Gastrocnemius medialis (tissue), 4 donors: ENCODE measurements at regions of chr2 and their contacts with region 1.

Region 1: DNA sequence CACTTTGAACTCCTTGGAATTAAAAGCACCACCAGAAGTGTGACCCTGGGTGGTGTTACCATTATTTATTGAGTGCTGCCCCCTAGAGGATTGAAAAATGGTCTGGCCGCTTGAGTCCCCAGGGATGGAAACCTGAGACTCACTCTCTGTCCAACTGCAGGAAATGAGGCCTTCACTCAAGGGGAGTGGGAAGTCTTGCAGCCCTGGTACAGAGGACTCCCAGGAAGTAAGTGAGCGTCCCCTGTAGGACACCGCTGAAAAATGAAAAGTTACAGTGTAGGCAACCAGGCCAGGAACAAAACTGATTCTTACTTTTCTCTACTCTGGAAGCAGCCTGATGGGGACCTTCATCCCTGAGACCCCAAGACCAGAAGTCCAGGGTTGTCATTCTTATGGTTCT is 2.2 kb upstream of the NRP2 start:
- DNase-seq: no peak
- ATAC-seq: peak in 1 of 2 donors; percentile 47
- H3K4me3 ChIP-seq: no peak overlapping the region
- H3K27ac ChIP-seq: no peak overlapping the region
- H3K4me1 ChIP-seq: peaks cover 13% of the 10 kb centered on the region in 2 donors
- H3K27me3 ChIP-seq: peaks cover 27 to 48% (median 34%) of the 10 kb centered on the region in 3 donors
- CTCF ChIP-seq: peak; percentile 21 to 53 (median 37)
- POLR2A ChIP-seq: no peak

Region 2: GRCh38 chr2:204260162-204260877 is 1419.7 kb before region 1 on chr2:
- in situ Hi-C with region 1: no loop called
- intact Hi-C with region 1: loop called (anchors 10 kb)
- DNase-seq: peak; percentile 5 to 35
- ATAC-seq: peak; percentile 41 to 66
- H3K4me3 ChIP-seq: no peak overlapping the region
- H3K27ac ChIP-seq: no peak overlapping the region
- H3K4me1 ChIP-seq: peaks cover 5 to 10% of the 10 kb centered on the region in 2 donors
- H3K27me3 ChIP-seq: no peaks in the 10 kb centered on the region
- CTCF ChIP-seq: peak; percentile 43 to 75 (median 58)
- POLR2A ChIP-seq: no peak

Region 3: DNA sequence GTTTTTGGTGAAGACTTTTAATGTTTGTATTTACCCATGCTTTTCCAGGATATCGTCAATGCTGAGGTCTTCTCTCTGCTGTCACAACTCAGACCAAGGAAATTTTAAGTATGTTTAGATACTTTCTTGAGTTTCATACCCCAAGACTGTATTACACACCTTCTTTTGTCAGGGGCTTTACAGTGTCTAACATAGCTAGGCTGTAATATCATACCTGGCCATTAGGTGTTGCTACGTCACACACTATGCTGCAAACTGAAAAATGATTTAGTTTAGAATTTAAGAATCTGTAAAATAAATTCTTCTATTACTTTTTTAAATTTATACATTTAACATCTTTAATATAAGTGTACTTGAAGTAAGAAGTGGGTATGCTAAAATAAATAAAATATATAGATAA is 356.1 kb before region 1 on chr2:
- in situ Hi-C with region 1: loop called in 1 of 4 experiments (anchors 10 kb)
- intact Hi-C with region 1: no loop called
- DNase-seq: no peak
- ATAC-seq: no peak
- H3K4me3 ChIP-seq: no peak overlapping the region
- H3K27ac ChIP-seq: no peak overlapping the region
- H3K4me1 ChIP-seq: no peaks in the 10 kb centered on the region
- H3K27me3 ChIP-seq: no peaks in the 10 kb centered on the region
- CTCF ChIP-seq: no peak
- POLR2A ChIP-seq: no peak